ENCODE measurements at regions of chr11 and their contacts with region 1.

Region 1: GRCh38 chr11:65853249-65853979 is 4.6 kb downstream of the CFL1 start:
- DNase-seq: no peak
- H3K4me3 Mint-ChIP-seq: no peak overlapping the region
- H3K27ac Mint-ChIP-seq: no peak overlapping the region
- H3K4me1 Mint-ChIP-seq: peaks cover 32% of the 10 kb centered on the region
- H3K27me3 Mint-ChIP-seq: no peaks in the 10 kb centered on the region

Region 2: DNA sequence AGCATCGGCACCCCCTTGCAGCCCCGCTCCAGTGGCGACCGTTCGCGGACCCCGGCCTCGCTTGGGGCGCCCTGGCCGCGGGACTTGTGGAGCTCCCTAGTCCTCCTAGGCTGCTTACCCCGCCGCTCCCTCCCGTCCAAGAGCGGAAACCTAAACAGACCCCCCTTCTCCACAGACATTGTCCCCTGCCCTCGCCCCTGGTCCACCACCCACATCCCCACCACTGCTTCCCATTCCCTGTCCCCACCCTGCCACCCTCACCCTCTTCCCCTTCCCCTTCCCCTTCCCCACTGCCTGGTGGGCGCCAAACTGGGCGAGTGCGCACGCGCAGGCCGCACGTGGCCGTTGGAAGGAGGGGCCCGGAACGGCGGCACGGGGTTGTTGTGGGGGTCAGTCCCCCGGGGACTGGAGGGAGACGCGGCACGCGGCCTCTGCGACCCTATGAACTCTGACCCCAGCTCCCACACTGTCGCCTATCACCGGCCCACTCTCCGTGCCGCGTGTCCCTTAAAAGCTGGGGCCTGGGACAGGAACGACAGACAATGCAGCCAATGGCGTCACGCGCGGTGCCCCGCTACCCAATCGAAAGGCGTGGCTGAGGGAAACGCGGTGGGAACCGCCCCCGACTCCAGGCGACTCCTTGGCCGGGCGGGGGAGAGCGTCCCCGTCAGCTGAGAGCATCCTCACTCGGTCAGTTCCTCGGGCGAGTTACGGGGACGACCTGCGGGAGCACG is 19.9 kb before region 1 on chr11 and contains the start of gene SNX32:
- intact Hi-C with region 1: loop called (anchors 1 kb)
- DNase-seq: peak; percentile 99
- H3K4me3 Mint-ChIP-seq: no peak within 1 kb of the TSS
- H3K27ac Mint-ChIP-seq: no peak within 1 kb of the TSS
- H3K4me1 Mint-ChIP-seq: peaks cover 21% of the 10 kb centered on the region
- H3K27me3 Mint-ChIP-seq: peaks cover 20% of the 10 kb centered on the region
- total RNA-seq, gene SNX32: 1.2 and 2.1 TPM in 2 replicates